Activated T-helper 1 cell treated with anti-CD3 and anti-CD28 coated beads, Interleukin-12 subunit alpha, Interleukin-12 subunit beta, Interleukin-2, Interleukin-4 antibody, amounts not matched to agents 30 ng/mL and 10 ng/mL and 1 ng/mL, durations not matched to agents 14 hours and 24 hours and 36 hours (primary cell): ENCODE measurements at regions of chr1 and their contacts with region 1.

Region 1: DNA sequence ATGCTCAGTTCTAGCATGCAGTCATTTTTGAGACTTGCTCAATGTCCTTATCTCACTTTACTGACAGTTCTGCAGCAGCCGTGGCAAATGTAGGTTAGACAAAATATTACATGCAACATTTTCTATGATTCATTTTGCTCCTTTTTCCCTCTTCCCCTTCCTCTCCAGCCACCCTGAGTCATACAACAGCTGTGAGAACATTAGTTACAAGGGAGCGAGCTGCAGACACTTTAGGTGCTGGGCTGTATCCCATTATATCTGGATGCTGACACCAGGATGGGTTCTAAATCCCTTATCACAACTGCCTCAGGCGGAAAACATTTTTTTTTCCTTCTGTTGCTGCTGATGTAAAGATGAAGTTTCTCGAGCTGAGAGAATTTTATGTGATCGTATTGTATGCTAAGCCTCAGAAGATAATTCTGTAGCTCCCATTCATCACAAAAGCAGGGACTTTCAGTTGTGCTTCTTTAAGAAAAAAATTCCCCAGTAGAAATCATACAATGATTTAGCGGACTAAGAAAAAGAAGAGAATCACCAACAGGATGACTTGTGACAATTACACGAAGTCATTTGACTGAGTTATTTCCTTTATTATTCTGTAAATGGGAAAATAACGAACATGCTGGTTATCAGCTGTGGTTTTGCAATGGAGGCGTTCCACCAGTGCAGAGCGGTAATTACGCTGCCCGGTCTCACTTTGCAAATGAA is 345.0 kb downstream of the DISC1 start:
- DNase-seq: no peak
- H3K4me3 Mint-ChIP-seq: no peak overlapping the region
- H3K27ac Mint-ChIP-seq: no peak overlapping the region
- H3K4me1 Mint-ChIP-seq: peaks cover 42% of the 10 kb centered on the region
- H3K27me3 Mint-ChIP-seq: peaks cover 2% of the 10 kb centered on the region

Region 2: GRCh38 chr1:231460614-231461013 is 510.9 kb before region 1 on chr1:
- intact Hi-C with region 1: loop called (anchors 5 kb)
- DNase-seq: peak; percentile 72
- H3K4me3 Mint-ChIP-seq: no peak overlapping the region
- H3K27ac Mint-ChIP-seq: peak overlapping the region; percentile 32
- H3K4me1 Mint-ChIP-seq: peaks cover 45% of the 10 kb centered on the region
- H3K27me3 Mint-ChIP-seq: peaks cover 64% of the 10 kb centered on the region

Region 3: DNA sequence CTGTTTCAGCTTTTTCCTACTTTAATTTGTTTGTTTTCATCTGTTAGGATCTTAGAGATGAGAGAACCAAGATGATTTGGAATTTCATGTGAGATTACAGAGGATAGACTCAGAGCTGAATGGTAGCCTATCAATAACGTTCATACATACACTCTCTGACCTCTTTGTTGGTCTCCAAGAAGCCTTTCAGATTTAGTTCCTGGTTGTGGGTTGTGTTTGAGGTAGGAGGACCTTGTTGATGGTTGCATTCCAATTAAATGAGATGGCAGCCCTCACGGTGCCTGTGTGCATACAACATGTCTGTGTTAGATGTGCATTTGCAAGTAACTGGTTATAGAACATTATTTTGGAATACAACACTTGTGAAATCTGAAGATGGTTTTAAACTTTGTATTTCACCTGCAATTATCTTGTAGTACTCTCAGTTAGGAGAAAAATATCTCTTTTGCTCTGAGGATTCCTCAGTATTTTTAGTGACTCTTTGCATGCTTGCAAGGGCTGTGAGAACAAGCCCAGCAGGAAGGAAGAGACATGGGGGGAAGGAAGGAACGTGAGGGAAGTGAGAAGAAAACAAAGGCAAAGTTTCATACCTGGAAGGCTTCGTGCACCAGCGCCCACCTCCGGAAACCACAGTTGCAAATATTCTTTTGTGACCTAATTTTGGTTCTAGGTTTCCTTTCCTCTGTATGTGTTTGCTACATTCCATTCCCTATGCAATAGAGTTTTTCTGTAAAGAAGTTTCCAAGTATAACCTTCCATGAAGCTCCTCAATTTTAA is 53.1 kb before region 1 on chr1:
- intact Hi-C with region 1: loop called (anchors 2 kb)
- DNase-seq: peak; percentile 8
- H3K4me3 Mint-ChIP-seq: peak overlapping the region; percentile 48
- H3K27ac Mint-ChIP-seq: no peak overlapping the region
- H3K4me1 Mint-ChIP-seq: peaks cover 53% of the 10 kb centered on the region
- H3K27me3 Mint-ChIP-seq: peaks cover 22% of the 10 kb centered on the region

Region 4: DNA sequence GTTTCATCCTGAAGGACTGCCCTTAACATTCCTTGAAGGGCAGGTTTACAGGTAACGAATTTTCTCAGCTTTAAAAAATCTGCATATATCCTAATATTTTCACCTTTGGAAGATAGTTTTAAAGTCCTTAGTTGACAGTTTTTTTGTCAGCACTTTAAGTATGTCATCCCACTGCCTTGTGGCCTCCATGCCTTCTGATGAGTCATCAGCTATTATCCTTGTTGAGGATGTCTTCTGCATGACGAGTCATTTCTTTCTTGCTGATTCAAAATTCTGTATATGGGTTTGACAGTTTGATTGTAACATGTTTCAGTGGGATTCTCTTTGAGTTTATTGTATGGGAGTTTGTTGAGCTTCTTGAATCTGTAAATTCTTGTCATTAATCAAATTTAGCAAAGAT is 155.6 kb after region 1 on chr1:
- intact Hi-C with region 1: loop called (anchors 10 kb)
- DNase-seq: no peak
- H3K4me3 Mint-ChIP-seq: no peak overlapping the region
- H3K27ac Mint-ChIP-seq: no peak overlapping the region
- H3K4me1 Mint-ChIP-seq: peaks cover 13% of the 10 kb centered on the region
- H3K27me3 Mint-ChIP-seq: peaks cover 19% of the 10 kb centered on the region

Region 5: DNA sequence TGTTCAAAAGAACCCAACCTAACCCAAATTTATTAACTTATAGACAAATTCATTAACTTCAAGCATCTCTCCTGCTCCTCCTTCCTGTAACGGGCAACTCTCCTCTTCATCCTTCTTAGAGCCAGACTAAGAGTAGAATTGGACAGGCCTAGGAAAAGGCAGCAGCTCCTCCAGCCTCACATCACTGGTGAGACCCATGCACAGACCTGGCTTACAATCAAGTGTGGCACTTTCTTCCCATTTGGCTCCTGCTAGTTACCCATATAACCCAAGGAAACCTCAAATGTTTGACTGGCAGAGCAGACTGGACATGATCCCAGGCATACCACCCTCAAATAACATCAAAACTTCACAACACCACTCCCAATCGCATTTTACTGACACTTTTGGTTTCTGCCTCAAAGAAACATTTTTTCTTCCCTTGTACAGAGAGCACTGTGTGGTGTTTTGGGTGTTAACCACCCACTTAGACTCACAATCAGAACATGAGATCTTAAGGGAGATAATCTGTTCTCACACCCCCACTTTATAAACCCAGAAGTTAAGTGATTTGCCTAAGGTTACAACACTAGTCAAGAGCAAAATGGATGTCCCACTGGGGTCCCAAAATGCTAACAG is 557.0 kb after region 1 on chr1:
- intact Hi-C with region 1: loop called (anchors 5 kb)
- DNase-seq: no peak
- H3K4me3 Mint-ChIP-seq: peak overlapping the region; percentile 28
- H3K27ac Mint-ChIP-seq: peak overlapping the region; percentile 14
- H3K4me1 Mint-ChIP-seq: peaks cover 17% of the 10 kb centered on the region
- H3K27me3 Mint-ChIP-seq: peaks cover 21% of the 10 kb centered on the region

Region 6: GRCh38 chr1:232589812-232590743 is 618.5 kb after region 1 on chr1:
- intact Hi-C with region 1: loop called (anchors 5 kb)
- DNase-seq: no peak
- H3K4me3 Mint-ChIP-seq: no peak overlapping the region
- H3K27ac Mint-ChIP-seq: peak overlapping the region; percentile 27
- H3K4me1 Mint-ChIP-seq: peaks cover 54% of the 10 kb centered on the region
- H3K27me3 Mint-ChIP-seq: no peaks in the 10 kb centered on the region

Region 7: DNA sequence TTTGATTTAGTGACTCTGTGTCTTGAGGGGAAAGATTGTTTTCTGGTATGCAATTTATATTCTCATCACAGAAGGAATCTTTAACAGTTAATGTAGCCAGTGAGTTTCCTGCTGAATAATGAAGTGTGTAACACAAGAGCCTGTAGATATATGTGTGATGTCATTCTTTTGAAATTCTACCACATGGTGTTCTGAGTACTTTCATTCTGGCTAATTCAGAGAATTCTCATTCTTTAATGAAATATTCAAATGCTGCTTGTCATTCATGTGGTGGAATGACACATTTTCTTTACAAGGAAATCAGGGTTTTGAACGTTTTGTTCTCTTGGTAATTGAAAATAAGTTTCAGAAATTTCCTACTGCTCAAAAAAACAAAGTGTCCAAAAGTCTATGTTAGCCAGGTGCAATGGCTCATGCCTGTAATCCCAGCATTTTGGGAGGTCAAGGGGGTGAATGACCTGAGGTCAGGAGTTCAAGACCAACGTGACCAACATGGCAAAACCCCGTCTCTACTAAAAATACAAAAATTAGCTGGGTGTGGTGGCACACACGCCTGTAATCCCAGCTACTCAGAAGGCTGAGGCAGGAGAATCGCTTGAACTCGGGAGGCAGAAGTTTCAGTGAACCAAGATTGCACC is 1435.6 kb after region 1 on chr1:
- intact Hi-C with region 1: loop called (anchors 5 kb)
- DNase-seq: no peak
- H3K4me3 Mint-ChIP-seq: no peak overlapping the region
- H3K27ac Mint-ChIP-seq: peak overlapping the region; percentile 64
- H3K4me1 Mint-ChIP-seq: peaks cover 22% of the 10 kb centered on the region
- H3K27me3 Mint-ChIP-seq: peaks cover 9% of the 10 kb centered on the region